Sigmoid colon (tissue), 7 donors: ENCODE measurements at regions of chr17 and their contacts with region 1.

Region 1: DNA sequence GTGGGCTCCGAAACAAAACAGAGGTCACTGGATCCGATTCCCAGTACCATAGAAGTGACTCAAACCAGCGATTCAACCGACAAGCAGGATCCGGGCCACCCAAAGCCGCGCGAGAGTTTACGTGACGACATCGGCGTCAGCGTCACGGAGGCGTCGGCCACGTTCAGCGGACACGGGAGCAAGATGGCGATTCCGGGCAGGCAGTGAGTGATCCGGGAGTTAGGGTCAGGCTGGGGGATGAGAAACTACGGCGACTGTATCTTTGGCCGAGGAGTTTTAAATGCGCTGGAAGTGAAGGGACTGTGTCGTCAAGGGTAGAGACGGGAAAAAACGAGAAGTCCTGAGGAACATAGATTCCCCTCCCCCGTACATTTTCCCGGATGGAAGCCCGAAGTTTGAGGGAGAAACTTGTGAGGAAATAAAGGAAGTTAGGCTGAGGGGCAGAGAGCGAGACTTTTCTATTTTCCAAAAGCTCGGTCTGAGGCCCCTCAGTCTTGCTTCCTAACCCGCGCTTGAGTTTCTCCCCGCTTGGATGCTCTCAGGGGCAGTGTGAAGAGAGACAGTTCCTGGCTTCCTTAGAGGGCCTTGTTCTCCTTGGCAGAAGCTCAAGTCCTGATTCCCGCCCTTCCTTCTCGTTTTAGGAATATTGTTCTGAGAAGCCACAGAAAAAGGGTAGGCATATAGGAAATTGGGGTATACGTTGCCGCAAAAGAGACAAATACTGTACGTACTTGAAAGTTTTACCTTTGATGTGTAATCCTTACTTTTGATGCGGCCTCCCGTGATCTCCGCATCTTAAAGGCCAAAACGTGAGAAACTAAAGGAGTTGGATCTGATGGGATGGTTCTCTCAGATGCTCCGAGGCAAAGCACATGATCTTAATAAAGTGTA is at the start of gene NSRP1:
- DNase-seq: peak; percentile 98
- H3K4me3 ChIP-seq: peak within 1 kb of the TSS; percentile 60 to 67 (median 64)
- H3K27ac ChIP-seq: peak within 1 kb of the TSS; percentile 89 to 98 (median 94)
- H3K4me1 ChIP-seq: peaks cover 0 to 43% (median 28%) of the 10 kb centered on the region in 4 donors
- H3K27me3 ChIP-seq: no peaks in the 10 kb centered on the region
- CTCF ChIP-seq: no peak
- EP300 ChIP-seq: peak in 1 of 4 donors; percentile 23
- POLR2A ChIP-seq: peak; percentile 94 to 96
- total RNA-seq, gene NSRP1: 30.4 to 47.6 (median 41.6) TPM

Region 2: DNA sequence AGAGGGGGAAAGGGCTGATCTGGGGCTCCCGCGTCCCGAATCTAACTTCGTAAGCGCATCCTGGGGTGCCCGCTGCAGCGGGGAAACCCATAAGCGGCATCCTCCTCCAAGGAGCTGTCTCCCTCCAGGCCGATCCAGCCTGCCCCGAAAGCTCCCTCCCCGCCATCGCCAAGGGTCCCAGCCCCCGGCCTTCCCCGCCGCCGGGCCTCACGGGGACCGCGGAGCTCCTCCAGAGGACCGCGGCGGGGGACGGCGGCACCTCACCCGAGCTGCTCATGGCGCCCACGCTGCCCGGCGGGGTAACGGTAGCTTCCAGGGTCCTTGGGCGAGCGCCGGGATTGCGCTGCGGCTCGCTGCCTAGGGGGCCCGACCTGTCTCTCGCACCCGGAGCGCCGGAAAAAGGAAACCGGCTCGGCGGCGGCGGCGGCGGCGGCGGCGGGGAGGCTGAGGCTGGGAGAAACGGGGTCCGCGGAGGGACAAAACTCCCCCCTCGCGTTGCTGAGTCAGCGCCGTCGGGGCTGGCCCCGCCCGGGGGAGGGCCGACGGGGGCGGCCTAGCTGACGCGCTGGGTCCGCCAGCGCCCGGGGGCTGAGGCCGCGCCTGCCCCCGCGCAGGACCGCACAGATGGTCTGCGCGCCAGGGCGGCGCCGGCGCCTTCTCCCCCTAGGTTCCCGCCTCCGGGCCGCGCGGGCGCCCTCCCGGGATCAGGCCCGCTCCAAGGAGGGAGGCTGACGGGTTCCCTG is 174.8 kb after region 1 on chr17 and contains the start of gene BLMH:
- intact Hi-C with region 1: loop called (anchors 5 kb)
- DNase-seq: peak; percentile 88
- H3K4me3 ChIP-seq: peak within 1 kb of the TSS; percentile 91 to 95 (median 94)
- H3K27ac ChIP-seq: peak within 1 kb of the TSS; percentile 71 to 83 (median 82)
- H3K4me1 ChIP-seq: peaks cover 0 to 16% (median 12%) of the 10 kb centered on the region in 4 donors
- H3K27me3 ChIP-seq: no peaks in the 10 kb centered on the region
- CTCF ChIP-seq: no peak
- EP300 ChIP-seq: no peak
- POLR2A ChIP-seq: no peak
- total RNA-seq, gene BLMH: 19.3 to 33.8 (median 27.2) TPM

Region 3: DNA sequence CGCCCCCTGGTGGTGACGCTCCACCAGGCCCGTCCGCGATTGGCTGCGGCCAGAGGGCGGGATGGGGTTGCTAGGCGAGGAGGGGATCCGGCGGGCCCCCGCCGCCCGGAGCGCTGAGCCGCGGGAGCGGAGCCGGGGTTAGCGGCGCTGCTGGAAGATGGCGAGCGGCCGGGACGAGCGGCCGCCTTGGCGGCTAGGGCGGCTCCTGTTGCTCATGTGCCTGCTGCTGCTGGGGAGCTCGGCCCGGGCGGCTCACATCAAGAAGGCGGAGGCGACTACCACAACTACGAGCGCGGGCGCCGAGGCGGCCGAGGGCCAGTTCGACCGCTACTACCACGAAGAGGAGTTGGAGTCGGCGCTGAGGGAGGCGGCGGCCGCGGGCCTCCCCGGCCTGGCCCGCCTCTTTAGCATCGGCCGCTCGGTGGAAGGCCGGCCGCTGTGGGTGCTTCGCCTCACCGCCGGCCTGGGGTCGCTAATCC is 262.0 kb after region 1 on chr17 and contains the start of gene CPD:
- intact Hi-C with region 1: loop called (anchors 5 kb)
- DNase-seq: peak; percentile 98
- H3K4me3 ChIP-seq: peak within 1 kb of the TSS; percentile 82 to 98 (median 90)
- H3K27ac ChIP-seq: peak within 1 kb of the TSS; percentile 89 to 94 (median 94)
- H3K4me1 ChIP-seq: peaks cover 0 to 41% (median 30%) of the 10 kb centered on the region in 4 donors
- H3K27me3 ChIP-seq: no peaks in the 10 kb centered on the region
- CTCF ChIP-seq: no peak
- EP300 ChIP-seq: no peak
- POLR2A ChIP-seq: peak; percentile 77 to 83
- total RNA-seq, gene CPD: 33.7 to 99.5 (median 42.2) TPM

Region 4: DNA sequence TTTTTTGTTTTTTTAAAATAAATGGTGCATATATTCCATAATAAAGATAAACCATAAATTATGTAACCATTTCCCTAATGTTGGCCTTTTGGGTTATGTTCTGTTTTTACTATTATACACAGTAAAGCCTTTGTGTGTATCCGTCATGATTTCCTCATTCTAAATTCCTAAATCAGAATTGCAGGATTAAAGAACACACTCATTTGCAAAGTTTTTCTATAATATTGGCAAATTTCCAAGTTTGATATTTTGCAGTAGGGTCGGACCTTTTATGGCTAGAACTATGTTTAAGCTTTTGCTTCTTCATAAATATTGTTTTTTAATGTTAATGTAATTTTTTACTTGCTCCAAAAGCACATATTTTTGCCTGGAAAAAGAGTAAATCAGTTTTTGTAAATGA is 376.9 kb after region 1 on chr17:
- intact Hi-C with region 1: loop called (anchors 5 kb)
- DNase-seq: no peak
- H3K4me3 ChIP-seq: no peak overlapping the region
- H3K27ac ChIP-seq: no peak overlapping the region
- H3K4me1 ChIP-seq: no peaks in the 10 kb centered on the region
- H3K27me3 ChIP-seq: no peaks in the 10 kb centered on the region
- CTCF ChIP-seq: no peak
- EP300 ChIP-seq: no peak
- POLR2A ChIP-seq: no peak